Activated CD8-positive, alpha-beta memory T cell treated with anti-CD3 and anti-CD28 coated beads, Interleukin-2, amount 10 ng/mL, durations not matched to agents 7 days and 5 days (primary cell): ENCODE measurements at regions of chr2 and their contacts with region 1.

Region 1: GRCh38 chr2:130332271-130333073 is 10.2 kb upstream of the IMP4 start:
- DNase-seq: peak; percentile 81
- ATAC-seq: peak; percentile 91
- H3K4me3 Mint-ChIP-seq: no peak overlapping the region
- H3K27ac Mint-ChIP-seq: no peak overlapping the region
- H3K4me1 Mint-ChIP-seq: peaks cover 8% of the 10 kb centered on the region
- H3K27me3 Mint-ChIP-seq: peaks cover 35% of the 10 kb centered on the region

Region 2: DNA sequence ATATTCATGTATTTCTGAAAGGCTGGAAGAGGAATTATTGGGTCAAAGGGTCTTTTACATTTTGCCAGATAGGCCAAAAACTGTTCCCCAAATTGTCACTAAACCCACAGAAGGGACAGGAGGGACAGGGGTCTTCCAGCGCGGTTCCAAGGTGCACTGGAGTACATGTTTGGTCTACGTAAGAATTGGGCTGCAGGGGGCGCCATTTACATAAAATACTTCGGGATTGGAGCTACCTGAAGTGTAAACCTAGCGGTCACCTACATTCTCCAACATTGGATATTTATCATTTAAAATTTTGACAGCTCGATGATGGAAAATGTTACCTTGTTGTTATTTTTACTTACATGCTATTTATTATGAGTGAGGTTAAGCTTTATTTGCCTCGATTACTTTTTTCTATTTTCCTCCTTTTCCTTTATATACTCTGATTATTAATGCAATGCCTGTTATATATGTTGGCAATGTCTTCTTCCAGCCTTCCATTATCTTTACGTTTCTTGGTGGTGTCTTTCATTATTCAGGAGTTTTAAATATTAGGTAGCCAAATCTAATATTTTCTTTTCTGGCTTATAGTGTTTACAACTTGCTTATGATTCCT is 396.0 kb before region 1 on chr2:
- CTCF ChIA-PET with region 1: interaction called, 32 read pairs
- DNase-seq: peak; percentile 71
- ATAC-seq: peak; percentile 61
- H3K4me3 Mint-ChIP-seq: no peak overlapping the region
- H3K27ac Mint-ChIP-seq: no peak overlapping the region
- H3K4me1 Mint-ChIP-seq: no peaks in the 10 kb centered on the region
- H3K27me3 Mint-ChIP-seq: peaks cover 41% of the 10 kb centered on the region

Region 3: DNA sequence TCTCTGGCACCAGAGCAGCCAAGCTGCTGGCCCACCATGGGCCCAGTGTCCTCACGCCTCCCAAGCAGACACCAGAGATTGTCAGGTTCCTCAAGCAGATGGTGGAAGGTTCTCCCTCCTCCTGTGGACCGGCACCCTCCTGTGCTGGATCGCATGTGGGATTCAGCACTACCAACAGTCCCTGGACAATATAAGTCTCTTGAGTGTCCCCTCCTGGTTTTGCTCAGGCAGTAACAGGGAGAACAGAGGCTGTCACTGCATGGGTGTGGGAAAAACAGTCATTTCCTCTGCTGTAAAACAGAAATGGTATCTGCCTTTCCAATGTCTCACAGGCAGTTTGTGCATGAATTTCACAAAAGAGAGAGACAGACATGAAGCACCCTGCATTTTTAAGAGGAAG is 86.5 kb before region 1 on chr2:
- CTCF ChIA-PET with region 1: no interaction called
- DNase-seq: no peak
- ATAC-seq: no peak
- H3K4me3 Mint-ChIP-seq: no peak overlapping the region
- H3K27ac Mint-ChIP-seq: no peak overlapping the region
- H3K4me1 Mint-ChIP-seq: no peaks in the 10 kb centered on the region
- H3K27me3 Mint-ChIP-seq: peaks cover 35% of the 10 kb centered on the region

Region 4: DNA sequence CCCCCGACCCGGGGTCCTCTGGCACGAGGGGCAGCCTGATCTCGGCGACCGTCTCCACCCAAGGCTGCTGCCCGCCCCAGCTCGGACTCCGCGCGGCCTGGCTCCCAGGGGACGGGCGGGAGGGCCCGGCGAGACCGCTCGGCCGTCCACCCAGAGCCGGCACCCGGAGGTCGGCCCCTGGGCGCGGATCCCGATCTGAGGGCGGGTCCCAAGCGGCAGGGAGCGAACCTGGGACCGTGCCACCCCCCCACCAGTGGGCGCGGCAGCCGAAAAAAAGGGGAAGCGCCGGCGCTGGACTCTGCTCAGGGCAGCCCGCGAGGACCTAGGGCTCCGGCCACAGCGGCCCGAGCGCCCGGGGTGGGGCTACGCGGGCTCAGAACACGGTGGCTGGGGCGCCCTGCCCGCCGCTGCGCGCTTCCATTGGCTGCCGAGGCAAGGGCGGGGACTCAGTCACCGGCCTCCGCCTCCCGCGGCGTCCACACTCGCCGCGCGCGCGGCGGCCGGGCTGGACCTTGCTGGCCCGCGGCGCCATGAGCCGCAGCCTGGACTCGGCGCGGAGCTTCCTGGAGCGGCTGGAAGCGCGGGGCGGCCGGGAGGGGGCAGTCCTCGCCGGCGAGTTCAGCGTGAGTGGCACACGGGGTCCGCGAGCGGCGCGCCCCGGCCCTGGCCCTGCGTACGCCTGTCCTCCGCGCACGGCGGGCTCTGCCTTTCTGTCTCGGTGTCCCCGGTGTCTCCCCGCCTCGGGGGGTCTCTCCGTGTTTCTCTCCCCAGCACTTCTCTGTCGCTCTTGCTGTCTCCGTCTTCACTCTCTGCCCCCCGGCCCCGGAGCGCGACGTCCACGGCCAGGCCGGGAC is 23.3 kb after region 1 on chr2 and contains the start of gene PTPN18:
- CTCF ChIA-PET with region 1: no interaction called
- DNase-seq: peak; percentile 72
- ATAC-seq: peak; percentile 97
- H3K4me3 Mint-ChIP-seq: peak within 1 kb of the TSS; percentile 77
- H3K27ac Mint-ChIP-seq: peak within 1 kb of the TSS; percentile 21
- H3K4me1 Mint-ChIP-seq: peaks cover 13% of the 10 kb centered on the region
- H3K27me3 Mint-ChIP-seq: no peaks in the 10 kb centered on the region
- total RNA-seq, gene PTPN18: 82.3 to 90.5 TPM